Activated T-helper 2 cell treated with anti-CD3 and anti-CD28 coated beads, Interferon-gamma antibody, Interleukin-2, Interleukin-4, amounts not matched to agents 10 μg/mL and 5 μg/mL and 100 μg/mL, durations not matched to agents 14 hours and 24 hours and 36 hours (primary cell): ENCODE measurements at regions of chr9 and their contacts with region 1.

Region 1: GRCh38 chr9:89318123-89319014 is at the start of gene SECISBP2:
- DNase-seq: peak; percentile 94
- H3K4me3 Mint-ChIP-seq: peak within 1 kb of the TSS; percentile 88
- H3K27ac Mint-ChIP-seq: peak within 1 kb of the TSS; percentile 98
- H3K4me1 Mint-ChIP-seq: peaks cover 78% of the 10 kb centered on the region
- H3K27me3 Mint-ChIP-seq: no peaks in the 10 kb centered on the region
- total RNA-seq, gene SECISBP2: 51.3 and 53.5 TPM in 2 replicates

Region 2: GRCh38 chr9:89274838-89275237 is 43.5 kb before region 1 on chr9:
- intact Hi-C with region 1: no loop called
- DNase-seq: no peak
- H3K4me3 Mint-ChIP-seq: no peak overlapping the region
- H3K27ac Mint-ChIP-seq: no peak overlapping the region
- H3K4me1 Mint-ChIP-seq: peaks cover 19% of the 10 kb centered on the region
- H3K27me3 Mint-ChIP-seq: peaks cover 19% of the 10 kb centered on the region

Region 3: DNA sequence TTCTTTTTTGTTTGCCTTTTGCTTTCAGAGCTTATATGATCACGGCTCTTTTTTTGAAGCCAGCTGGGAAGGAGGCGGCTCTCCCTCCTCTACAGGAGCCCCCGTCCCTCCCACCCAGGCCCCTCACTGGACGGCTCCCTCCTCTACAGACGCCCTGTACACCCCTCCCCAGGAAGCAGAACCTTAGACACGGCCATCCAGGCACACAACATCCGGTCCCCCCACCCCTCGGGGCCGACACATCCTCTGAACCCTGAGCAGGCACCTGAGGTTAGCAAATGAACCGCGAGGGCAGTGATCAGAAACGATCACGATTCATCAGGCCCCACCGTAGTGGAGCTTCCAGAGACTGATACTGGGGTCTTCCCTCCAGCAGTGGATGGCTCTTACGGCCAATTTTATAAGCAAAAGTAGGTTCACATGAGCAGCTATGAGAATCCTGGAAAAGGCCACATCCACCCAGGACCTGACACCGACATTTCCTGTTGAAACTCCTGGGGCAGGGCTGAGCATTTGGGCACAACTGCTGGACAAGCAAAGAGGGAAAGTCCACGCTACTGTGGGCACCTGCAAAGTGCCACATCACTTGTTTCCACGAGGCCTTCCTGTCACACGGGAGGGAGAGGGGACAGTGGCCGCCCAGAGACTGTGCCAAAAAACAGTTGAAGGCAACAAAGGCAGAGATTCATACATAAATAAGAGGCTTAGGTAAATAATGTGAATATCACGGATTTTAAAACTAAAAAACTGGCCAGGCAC is 100.7 kb after region 1 on chr9:
- intact Hi-C with region 1: loop called (anchors 2 kb)
- DNase-seq: peak; percentile 72
- H3K4me3 Mint-ChIP-seq: peak overlapping the region; percentile 81
- H3K27ac Mint-ChIP-seq: peak overlapping the region; percentile 90
- H3K4me1 Mint-ChIP-seq: peaks cover 82% of the 10 kb centered on the region
- H3K27me3 Mint-ChIP-seq: no peaks in the 10 kb centered on the region

Region 4: DNA sequence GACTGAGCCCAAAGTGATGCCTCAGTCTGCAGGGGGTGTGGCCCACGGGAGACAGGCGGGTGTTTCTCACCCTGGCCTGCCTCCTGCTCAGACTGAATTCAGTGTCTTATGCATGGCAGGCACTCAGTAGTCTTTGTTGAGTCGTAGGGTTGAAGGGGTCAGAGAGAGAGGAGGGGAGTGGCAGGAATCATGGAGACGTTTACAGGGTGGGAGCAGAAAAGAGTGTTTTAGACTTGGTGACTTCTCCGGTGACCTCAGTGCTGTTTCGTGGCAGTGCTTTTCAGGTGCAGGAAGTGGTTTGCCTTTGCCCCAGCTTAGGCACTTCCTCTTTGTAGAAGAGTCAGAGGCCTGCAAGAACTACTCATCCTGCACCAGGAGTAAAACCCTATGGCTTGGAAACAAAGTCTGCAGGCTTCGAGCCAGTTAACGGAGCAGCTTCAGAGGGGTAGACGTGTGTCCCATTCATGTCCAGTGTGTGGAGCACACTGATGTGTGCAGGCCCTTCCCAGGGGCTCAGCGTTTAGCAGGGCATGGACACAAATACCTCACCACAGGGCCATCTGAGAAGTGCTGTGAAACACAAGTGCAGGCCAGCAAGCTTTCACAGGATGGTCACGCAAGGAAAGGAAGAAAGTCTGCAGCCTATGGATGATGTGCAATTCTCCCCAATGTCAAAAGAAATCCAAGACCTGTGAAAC is 204.0 kb after region 1 on chr9:
- intact Hi-C with region 1: loop called (anchors 2 kb)
- DNase-seq: peak; percentile 82
- H3K4me3 Mint-ChIP-seq: peak overlapping the region; percentile 71
- H3K27ac Mint-ChIP-seq: peak overlapping the region; percentile 100
- H3K4me1 Mint-ChIP-seq: peaks cover 85% of the 10 kb centered on the region
- H3K27me3 Mint-ChIP-seq: no peaks in the 10 kb centered on the region

Region 5: DNA sequence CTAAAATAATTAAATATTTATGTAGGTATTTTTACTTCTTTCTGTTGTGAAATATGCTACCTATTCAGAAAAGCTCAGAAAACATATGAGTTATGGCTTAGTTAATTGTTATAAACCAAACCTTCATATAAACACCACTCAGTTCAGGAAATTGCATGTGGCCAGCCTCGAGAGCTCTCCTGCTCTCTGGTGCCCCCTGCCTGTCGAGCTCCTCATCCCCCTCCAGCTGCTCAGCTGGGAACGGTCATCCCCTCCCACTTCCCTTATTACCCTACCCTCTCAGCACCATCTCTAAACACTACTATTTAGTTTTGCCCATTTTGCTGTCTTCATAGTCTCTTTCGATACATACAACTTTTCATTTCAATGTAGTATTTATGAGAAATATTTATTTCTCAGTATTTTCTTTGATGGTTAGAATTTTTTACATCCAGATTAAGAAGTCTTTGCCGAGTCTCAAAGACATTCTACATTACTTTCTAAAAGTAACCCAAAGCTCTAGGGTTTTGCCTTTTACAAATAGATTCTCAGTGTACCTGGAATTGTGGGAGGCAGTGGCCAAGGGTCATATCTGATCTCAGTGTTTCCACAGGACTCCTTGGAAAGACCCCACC is 230.8 kb after region 1 on chr9:
- intact Hi-C with region 1: loop called (anchors 2 kb)
- DNase-seq: peak; percentile 76
- H3K4me3 Mint-ChIP-seq: no peak overlapping the region
- H3K27ac Mint-ChIP-seq: peak overlapping the region; percentile 5
- H3K4me1 Mint-ChIP-seq: peaks cover 23% of the 10 kb centered on the region
- H3K27me3 Mint-ChIP-seq: peaks cover 7% of the 10 kb centered on the region

Region 6: GRCh38 chr9:89710697-89711096 is 392.3 kb after region 1 on chr9:
- intact Hi-C with region 1: no loop called
- DNase-seq: no peak
- H3K4me3 Mint-ChIP-seq: no peak overlapping the region
- H3K27ac Mint-ChIP-seq: peak overlapping the region; percentile 56
- H3K4me1 Mint-ChIP-seq: peaks cover 64% of the 10 kb centered on the region
- H3K27me3 Mint-ChIP-seq: no peaks in the 10 kb centered on the region